ENCODE measurements at regions of chr3 and their contacts with region 1.

Region 1: GRCh38 chr3:47824541-47825473 is 21.9 kb downstream of the DHX30 start:
- DNase-seq: peak; percentile 81
- ATAC-seq: peak; percentile 99
- H3K4me3 Mint-ChIP-seq: peak overlapping the region; percentile 91
- H3K27ac Mint-ChIP-seq: peak overlapping the region; percentile 77
- H3K4me1 Mint-ChIP-seq: peaks cover 35% of the 10 kb centered on the region
- H3K27me3 Mint-ChIP-seq: no peaks in the 10 kb centered on the region

Region 2: GRCh38 chr3:47522082-47522987 is 302.5 kb before region 1 on chr3:
- CTCF ChIA-PET with region 1: interaction called, 22 read pairs
- DNase-seq: peak; percentile 89
- ATAC-seq: peak; percentile 92
- H3K4me3 Mint-ChIP-seq: no peak overlapping the region
- H3K27ac Mint-ChIP-seq: peak overlapping the region; percentile 26
- H3K4me1 Mint-ChIP-seq: peaks cover 9% of the 10 kb centered on the region
- H3K27me3 Mint-ChIP-seq: peaks cover 2% of the 10 kb centered on the region

Region 3: DNA sequence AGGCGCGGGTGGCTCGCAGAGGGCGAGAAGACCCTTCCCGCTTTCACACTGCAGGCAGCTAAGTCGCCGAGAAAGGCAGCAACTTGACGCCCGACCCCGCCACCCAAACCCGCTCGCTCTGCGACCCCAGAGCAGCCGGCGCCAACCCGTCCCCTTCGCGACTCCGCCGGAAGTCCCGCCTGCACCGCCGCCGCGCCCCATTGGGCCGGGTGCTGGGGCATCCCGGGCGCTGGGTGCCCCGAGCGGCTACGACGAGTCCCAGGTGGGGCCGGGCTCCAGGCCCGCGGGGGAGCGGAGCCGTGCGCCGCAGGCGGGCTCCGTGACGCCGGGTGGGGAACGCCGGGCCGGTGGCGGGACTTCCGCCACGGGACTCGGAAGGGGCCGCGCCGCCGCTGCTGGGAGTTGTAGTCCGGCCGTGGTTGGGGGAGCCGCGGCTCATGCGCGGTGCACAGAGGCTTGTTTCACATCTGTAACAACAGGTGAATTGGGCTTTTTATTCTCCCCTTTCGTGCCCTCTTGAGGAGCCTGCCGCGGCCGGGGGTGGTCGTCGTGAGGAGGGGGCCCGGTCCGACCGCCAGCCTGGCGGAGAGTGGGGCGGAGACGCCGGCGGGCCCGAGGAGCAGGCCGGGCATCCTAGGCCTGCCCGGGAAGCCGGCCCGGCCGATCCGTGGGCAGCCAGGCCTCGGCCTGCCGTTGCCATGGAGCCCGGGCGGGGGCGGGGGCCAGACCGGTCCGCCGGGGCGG is 21.9 kb before region 1 on chr3 and contains the start of gene DHX30:
- CTCF ChIA-PET with region 1: interaction called, 22 read pairs
- DNase-seq: peak; percentile 88
- ATAC-seq: peak; percentile 92
- H3K4me3 Mint-ChIP-seq: peak within 1 kb of the TSS; percentile 89
- H3K27ac Mint-ChIP-seq: peak within 1 kb of the TSS; percentile 93
- H3K4me1 Mint-ChIP-seq: peaks cover 28% of the 10 kb centered on the region
- H3K27me3 Mint-ChIP-seq: no peaks in the 10 kb centered on the region
- total RNA-seq, gene DHX30: 84.8 to 95.6 TPM

Region 4: DNA sequence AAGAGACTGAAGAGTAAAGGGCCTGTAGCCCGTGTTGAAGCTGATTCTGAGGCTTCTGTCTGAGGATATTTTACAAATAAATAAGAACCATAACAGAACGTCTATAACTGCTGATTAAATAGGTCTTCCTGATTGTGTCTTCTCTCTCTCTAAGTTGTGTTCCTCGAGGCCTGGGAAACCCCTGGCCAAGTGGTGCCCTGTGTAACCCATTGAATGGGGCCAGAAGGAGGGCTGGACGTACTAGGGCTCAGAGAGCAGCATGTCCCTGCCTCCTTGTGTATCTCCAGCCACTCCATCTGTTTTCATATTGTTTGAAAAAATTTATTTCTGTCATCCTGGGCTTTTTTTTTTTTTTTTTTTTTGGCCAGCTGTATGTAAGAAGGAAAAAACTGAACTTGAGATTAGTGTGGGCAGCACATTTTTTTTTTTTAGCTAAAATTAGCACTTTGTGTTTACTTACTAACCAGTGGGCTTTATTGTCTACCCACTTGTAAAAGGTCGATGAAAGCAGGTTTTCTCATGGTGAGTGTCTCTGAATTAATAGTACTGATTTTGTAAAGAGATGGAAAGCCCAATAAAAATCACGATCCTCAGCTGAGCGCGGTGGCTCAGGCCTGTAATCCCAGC is 11.1 kb before region 1 on chr3:
- CTCF ChIA-PET with region 1: interaction called, 52 read pairs
- DNase-seq: no peak
- ATAC-seq: no peak
- H3K4me3 Mint-ChIP-seq: no peak overlapping the region
- H3K27ac Mint-ChIP-seq: no peak overlapping the region
- H3K4me1 Mint-ChIP-seq: no peaks in the 10 kb centered on the region
- H3K27me3 Mint-ChIP-seq: no peaks in the 10 kb centered on the region

Region 5: DNA sequence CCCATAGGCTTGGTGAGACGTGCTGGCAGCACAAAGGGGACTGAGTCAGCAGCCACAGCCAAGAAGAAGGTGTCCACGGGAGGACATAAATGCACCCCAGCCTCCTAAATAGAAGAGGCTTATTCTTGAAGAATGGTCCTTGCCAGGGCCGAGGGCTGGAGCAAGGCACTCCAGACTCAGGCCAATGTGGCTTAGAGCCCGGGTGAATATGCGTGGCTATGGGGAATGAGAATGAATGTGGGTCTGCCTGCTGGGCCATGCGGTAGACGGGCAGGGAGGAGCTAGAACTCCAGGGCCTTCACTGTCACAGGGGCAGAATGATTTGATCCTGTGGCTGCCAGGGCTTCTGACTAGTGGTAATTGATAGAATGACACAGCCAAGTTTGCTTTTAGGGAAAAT is 12.2 kb after region 1 on chr3:
- CTCF ChIA-PET with region 1: interaction called, 37 read pairs
- DNase-seq: no peak
- ATAC-seq: no peak
- H3K4me3 Mint-ChIP-seq: no peak overlapping the region
- H3K27ac Mint-ChIP-seq: no peak overlapping the region
- H3K4me1 Mint-ChIP-seq: no peaks in the 10 kb centered on the region
- H3K27me3 Mint-ChIP-seq: no peaks in the 10 kb centered on the region

Region 6: GRCh38 chr3:47989981-47990440 is 165.2 kb after region 1 on chr3:
- CTCF ChIA-PET with region 1: interaction called, 36 read pairs
- DNase-seq: peak; percentile 82
- ATAC-seq: peak; percentile 99
- H3K4me3 Mint-ChIP-seq: no peak overlapping the region
- H3K27ac Mint-ChIP-seq: peak overlapping the region; percentile 52
- H3K4me1 Mint-ChIP-seq: peaks cover 8% of the 10 kb centered on the region
- H3K27me3 Mint-ChIP-seq: no peaks in the 10 kb centered on the region

Region 7: DNA sequence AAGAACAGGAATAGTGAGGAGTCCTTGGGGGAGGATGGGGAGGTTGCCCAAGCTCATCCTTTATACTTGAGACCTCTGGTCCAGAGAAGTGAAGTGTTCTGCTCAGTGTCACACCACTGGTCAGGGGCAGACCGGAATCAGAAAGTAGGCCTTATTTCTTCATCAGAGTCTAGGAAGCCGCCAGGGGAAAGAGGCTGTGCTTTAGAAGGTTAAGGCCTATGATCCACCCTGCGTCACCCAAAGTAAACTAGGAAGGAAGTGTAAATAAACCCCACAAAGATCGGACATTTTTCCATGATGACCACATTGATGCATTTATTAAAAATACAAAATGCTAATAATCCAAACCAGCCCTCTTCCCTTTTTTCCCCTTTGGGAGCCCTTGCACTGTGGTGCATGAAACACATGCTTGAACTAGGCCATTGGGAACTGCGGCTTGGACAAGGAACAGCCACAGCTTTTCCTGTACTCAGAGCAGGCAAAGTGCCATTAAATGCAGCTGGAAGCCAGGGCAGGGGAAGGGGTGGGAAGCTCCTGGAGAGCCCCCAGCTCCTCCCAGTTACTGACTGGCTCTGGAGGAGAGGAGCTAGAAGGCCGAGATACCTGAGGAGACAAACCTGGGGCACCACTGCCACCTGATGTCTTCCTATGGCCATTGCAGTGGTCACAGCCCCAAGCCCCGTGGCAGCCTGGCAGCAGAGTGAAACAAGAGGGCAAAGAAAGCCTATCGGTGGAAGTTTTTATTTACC is 326.4 kb after region 1 on chr3:
- CTCF ChIA-PET with region 1: interaction called, 28 read pairs
- DNase-seq: peak; percentile 82
- ATAC-seq: peak; percentile 99
- H3K4me3 Mint-ChIP-seq: no peak overlapping the region
- H3K27ac Mint-ChIP-seq: peak overlapping the region; percentile 3
- H3K4me1 Mint-ChIP-seq: peaks cover 2% of the 10 kb centered on the region
- H3K27me3 Mint-ChIP-seq: peaks cover 3% of the 10 kb centered on the region

Measured in activated CD8-positive, alpha-beta memory T cell treated with anti-CD3 and anti-CD28 coated beads, Interleukin-2, amount 10 ng/mL, durations not matched to agents 7 days and 5 days (primary cell).